ENCODE measurements at regions of chr18 and their contacts with region 1.

Region 1: DNA sequence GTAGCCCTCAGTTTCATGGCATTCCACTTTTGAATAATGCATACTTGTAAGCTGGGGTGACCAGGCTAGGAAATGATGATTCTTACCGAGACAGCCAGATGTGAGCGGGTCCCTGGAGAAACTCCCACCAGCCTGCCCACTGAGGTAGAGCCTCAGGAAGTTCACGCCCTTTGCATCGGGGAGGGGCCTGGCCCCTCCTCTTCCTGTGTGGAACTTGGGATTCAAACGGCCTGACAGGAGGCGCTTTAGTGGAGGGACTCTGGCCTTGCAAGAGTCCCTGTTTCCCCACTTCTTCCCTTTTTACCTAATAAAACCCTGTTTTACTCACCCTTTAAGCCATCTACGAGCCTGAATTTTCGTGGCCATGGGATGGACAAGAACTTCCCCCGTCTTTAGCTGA is 44.6 kb downstream of the MRO start:
- DNase-seq: no peak

Region 2: GRCh38 chr18:50397023-50397422 is 378.2 kb before region 1 on chr18:
- intact Hi-C with region 1: loop called (anchors 10 kb)
- DNase-seq: no peak

Region 3: DNA sequence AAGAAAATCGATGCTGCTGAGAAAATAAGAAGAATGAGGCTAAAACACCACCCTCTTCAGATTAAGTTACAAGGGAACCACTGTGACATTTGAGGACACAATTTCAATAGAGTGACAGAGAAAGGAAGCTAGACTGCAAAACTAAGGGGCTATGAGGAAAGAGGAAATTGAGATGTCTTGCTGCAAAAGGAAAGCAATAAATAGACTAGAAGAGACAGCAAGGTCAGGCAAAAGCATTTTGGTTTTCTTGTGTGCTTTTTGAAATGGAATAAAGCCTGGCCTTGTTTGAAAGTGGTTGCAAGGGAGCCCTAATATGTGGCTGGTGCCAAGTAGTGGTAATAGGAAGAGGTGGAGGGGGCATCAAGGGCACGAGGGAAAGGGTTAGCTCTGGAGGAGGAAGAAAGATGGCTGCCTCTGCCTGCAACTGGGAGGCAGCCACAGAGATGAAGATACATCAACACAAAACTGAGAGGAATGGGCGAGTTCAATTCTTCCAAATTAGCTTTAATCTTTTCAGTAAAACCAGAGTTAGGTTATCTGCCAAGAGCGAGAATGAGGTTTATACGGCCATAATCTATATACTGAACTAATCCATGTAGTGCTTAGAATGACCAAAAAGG is 45.8 kb after region 1 on chr18:
- intact Hi-C with region 1: no loop called
- DNase-seq: peak in 2 of 42 donors; percentile 8 to 24

Region 4: DNA sequence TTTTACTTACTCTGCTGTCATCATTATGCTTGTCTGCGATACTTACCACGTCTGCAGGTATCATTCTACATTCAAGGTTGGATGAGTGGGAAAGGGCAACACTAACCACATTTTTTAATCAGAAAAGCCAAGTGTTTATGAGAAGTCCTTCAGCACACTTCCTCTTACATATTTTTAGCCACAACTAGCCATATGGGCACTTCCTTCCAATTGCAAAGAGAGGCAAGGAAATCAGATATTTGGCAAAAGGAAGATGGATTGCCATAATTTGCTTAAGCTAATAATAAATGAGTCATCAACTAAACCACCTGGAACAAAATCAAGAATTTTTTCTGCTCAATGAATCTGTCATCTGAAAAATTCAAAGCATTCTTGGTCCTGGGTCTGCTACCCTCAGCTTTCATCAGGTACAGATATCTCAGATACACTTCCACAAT is 61.3 kb after region 1 on chr18:
- intact Hi-C with region 1: no loop called
- DNase-seq: peak in 1 of 42 donors; percentile 2

Region 5: DNA sequence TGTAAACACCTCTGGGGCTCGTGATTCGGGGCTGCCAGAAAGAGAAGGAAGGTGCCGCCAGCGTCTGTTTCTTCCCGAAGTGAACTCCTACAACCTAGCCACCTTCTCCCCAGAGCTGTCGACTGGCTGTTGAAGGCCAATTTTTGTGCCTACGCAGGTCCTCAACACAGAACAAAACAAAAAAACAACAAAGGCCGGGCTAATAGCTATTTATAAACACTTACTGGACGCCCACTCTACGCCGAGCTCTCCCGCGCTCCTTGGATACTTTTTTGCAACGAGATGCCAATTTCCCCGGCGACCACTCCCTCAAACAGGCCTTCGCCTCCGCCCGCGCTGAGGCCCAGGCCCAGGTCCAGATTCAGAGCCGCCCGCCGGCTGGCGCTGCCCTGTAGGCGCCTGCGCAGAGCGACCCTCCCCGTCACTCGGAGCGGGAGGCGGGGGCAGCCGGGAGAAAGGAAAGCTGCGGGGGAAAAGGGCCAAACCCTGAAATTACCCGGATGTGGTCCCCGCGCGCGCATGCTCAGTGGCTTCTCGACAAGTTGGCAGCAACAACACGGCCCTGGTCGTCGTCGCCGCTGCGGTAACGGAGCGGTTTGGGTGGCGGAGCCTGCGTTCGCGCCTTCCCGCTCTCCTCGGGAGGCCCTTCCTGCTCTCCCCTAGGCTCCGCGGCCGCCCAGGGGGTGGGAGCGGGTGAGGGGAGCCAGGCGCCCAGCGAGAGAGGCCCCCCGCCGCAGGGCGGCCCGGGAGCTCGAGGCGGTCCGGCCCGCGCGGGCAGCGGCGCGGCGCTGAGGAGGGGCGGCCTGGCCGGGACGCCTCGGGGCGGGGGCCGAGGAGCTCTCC is 254.7 kb after region 1 on chr18 and contains the start of gene SMAD4:
- intact Hi-C with region 1: no loop called
- DNase-seq: peak; percentile 90 to 99 (median 96)